Naive thymus-derived CD4-positive, alpha-beta T cell (primary cell): ENCODE measurements at regions of chr18 and their contacts with region 1.

Region 1: DNA sequence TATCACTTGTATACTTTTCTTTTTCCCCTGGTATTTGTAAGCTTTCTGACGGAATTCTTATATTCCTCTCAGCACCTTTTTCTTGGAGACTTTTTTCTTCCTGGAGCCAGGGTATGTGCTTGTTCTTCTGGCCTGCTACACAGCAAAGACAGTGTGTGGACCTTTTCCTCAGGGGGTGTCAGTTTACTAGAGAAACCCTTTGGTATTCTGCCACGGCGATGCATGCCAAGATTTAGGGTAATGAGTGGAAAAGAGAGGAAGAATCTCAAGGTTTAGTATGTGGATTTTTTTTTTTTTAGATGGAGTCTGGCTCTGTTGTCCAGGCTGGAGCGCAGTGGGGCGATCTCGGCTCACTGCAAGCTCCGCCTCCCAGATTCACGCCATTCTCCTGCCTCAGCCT is 152.2 kb downstream of the PHLPP1 start:
- DNase-seq: no peak
- ATAC-seq: no peak
- H3K4me3 ChIP-seq: no peak overlapping the region
- H3K4me3 Mint-ChIP-seq: peak overlapping the region in 1 of 10 donors; percentile 5
- H3K27ac ChIP-seq: no peak overlapping the region
- H3K27ac Mint-ChIP-seq: peak overlapping the region in 1 of 9 donors; percentile 14
- H3K4me1 ChIP-seq: peaks cover 3 to 9% of the 10 kb centered on the region in 2 donors
- H3K4me1 Mint-ChIP-seq: peaks cover 12 to 33% (median 21%) of the 10 kb centered on the region in 7 donors
- H3K27me3 ChIP-seq: no peaks in the 10 kb centered on the region
- H3K27me3 Mint-ChIP-seq: no peaks in the 10 kb centered on the region

Region 2: GRCh38 chr18:62767321-62767720 is 100.2 kb before region 1 on chr18:
- CTCF ChIA-PET with region 1: no interaction called
- POLR2A ChIA-PET with region 1: no interaction called
- intact Hi-C with region 1: no loop called
- DNase-seq: no peak
- ATAC-seq: no peak
- H3K4me3 ChIP-seq: no peak overlapping the region
- H3K4me3 Mint-ChIP-seq: no peak overlapping the region
- H3K27ac ChIP-seq: no peak overlapping the region
- H3K27ac Mint-ChIP-seq: no peak overlapping the region
- H3K4me1 ChIP-seq: peaks cover 0 to 4% of the 10 kb centered on the region in 2 donors
- H3K4me1 Mint-ChIP-seq: peaks cover 10 to 18% (median 13%) of the 10 kb centered on the region in 7 donors
- H3K27me3 ChIP-seq: no peaks in the 10 kb centered on the region
- H3K27me3 Mint-ChIP-seq: no peaks in the 10 kb centered on the region

Region 3: GRCh38 chr18:62784966-62785413 is 82.5 kb before region 1 on chr18:
- CTCF ChIA-PET with region 1: no interaction called
- POLR2A ChIA-PET with region 1: no interaction called
- intact Hi-C with region 1: loop called in 1 of 2 experiments (anchors 5 kb)
- DNase-seq: no peak
- ATAC-seq: no peak
- H3K4me3 ChIP-seq: no peak overlapping the region
- H3K4me3 Mint-ChIP-seq: peak overlapping the region in 2 of 10 donors; percentile 3 to 22
- H3K27ac ChIP-seq: no peak overlapping the region
- H3K27ac Mint-ChIP-seq: no peak overlapping the region
- H3K4me1 ChIP-seq: peaks cover 0 to 10% of the 10 kb centered on the region in 2 donors
- H3K4me1 Mint-ChIP-seq: peaks cover 27 to 49% (median 33%) of the 10 kb centered on the region in 7 donors
- H3K27me3 ChIP-seq: no peaks in the 10 kb centered on the region
- H3K27me3 Mint-ChIP-seq: peaks cover 0 to 2% (median 0%) of the 10 kb centered on the region in 5 donors

Region 4: DNA sequence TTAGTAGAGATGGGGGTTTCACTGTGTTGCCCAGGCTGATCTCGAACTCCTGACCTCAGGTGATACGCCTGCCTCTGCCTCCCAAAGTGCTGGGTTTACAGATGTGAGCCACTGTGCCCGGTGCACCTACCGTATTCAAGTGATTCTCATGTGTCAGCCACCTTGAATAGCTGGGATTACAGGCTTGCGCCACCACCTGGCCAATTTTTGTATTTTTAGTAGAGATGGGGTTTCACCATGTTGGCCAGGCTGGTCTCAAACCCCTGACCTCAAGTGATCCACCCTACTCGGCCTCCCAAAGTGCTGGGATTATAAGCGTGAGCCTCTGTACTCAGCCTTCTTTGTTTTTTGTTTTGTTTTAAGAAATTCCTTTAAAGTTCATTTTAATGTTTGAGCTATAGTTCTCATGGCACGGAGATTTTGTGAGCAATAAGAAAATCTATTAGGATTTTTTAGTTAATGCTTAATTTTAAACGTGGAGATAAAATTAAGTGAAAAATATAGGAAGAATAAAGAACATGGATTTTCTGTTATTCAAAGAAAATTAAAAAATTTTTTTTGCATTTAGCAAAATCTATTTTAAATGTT is 90.4 kb after region 1 on chr18:
- CTCF ChIA-PET with region 1: interaction called, 3 read pairs
- POLR2A ChIA-PET with region 1: no interaction called
- intact Hi-C with region 1: loop called in 1 of 2 experiments (anchors 5 kb)
- DNase-seq: peak in 6 of 9 donors; percentile 18 to 46 (median 28)
- ATAC-seq: peak; percentile 64
- H3K4me3 ChIP-seq: no peak overlapping the region
- H3K4me3 Mint-ChIP-seq: no peak overlapping the region
- H3K27ac ChIP-seq: no peak overlapping the region
- H3K27ac Mint-ChIP-seq: no peak overlapping the region
- H3K4me1 ChIP-seq: peaks cover 0 to 17% of the 10 kb centered on the region in 2 donors
- H3K4me1 Mint-ChIP-seq: peaks cover 11 to 22% (median 17%) of the 10 kb centered on the region in 7 donors
- H3K27me3 ChIP-seq: no peaks in the 10 kb centered on the region
- H3K27me3 Mint-ChIP-seq: no peaks in the 10 kb centered on the region

Region 5: DNA sequence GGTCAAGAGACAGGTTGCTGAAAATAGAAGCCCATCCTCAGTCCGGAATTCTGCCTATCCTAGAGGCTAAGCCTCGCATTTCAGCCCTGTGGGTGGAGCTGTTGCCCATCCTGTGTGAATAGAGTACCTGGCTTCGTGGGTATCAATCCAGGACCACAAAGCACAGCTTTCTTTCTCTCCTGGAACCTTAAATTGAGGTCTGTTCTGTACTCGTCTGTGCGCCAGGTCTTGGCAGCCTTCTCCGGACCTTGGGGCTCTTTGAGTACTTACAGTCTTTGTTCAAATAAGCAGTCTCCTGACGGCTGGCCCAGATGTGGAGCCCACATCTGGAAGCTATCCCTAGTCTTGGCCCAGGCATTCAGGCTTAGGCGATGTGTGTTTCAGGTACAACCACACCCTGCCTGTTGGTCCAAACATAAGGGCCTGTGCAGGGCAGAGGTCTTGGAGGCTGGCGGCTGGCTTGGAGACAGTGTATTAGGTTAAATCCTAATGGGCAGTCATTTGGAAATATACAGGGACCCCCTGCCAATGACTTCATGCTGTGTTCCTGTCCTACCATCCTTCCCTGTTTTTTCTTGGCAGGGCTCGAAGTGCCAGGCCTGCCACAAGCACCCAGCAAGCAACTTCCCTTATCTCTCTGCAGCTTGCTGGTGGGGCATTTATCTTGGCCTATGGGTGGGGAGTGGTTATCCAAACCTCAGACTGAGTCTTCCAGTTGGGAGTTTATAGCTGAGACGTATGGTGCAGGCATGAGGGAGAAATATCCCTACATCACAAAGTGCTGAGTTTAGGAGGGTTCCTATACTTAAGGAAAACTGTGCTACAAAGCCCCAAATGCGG is 157.9 kb after region 1 on chr18:
- CTCF ChIA-PET with region 1: no interaction called
- POLR2A ChIA-PET with region 1: no interaction called
- intact Hi-C with region 1: no loop called
- DNase-seq: no peak
- ATAC-seq: no peak
- H3K4me3 ChIP-seq: no peak overlapping the region
- H3K4me3 Mint-ChIP-seq: no peak overlapping the region
- H3K27ac ChIP-seq: no peak overlapping the region
- H3K27ac Mint-ChIP-seq: no peak overlapping the region
- H3K4me1 ChIP-seq: no peaks in the 10 kb centered on the region
- H3K4me1 Mint-ChIP-seq: no peaks in the 10 kb centered on the region
- H3K27me3 ChIP-seq: no peaks in the 10 kb centered on the region
- H3K27me3 Mint-ChIP-seq: peaks cover 0 to 14% (median 0%) of the 10 kb centered on the region in 5 donors